ENCODE measurements at regions of chr18 and their contacts with region 1.

Region 1: DNA sequence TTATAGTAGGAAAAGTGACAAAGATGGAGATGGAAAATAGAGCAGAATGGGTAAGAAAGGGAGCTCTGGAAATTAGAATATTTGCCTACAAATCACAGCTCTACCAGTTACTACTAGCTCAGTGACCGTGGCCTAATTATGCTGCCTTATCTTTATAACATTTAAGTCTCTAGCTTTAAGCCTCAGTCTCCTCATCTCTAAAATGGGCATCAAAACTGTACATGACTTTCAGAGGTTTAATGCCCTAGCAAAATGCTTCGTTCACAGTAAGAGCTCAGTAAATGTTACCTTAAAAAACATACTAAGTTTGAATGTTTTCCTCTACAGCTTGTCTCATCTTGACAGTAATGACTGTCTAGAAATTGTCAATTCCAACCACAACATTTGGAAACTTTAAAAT is 8.3 kb upstream of the PTPRM start:
- DNase-seq: no peak
- H3K4me3 ChIP-seq: no peak overlapping the region
- H3K27me3 ChIP-seq: no peaks in the 10 kb centered on the region
- CTCF ChIP-seq: no peak

Region 2: GRCh38 chr18:7541835-7542234 is 16.9 kb before region 1 on chr18:
- CTCF ChIA-PET with region 1: no interaction called
- POLR2A ChIA-PET with region 1: interaction called, 13 read pairs
- DNase-seq: no peak
- H3K4me3 ChIP-seq: no peak overlapping the region
- H3K27me3 ChIP-seq: no peaks in the 10 kb centered on the region; the same call in 1 of the 2 replicates
- CTCF ChIP-seq: no peak

Region 3: DNA sequence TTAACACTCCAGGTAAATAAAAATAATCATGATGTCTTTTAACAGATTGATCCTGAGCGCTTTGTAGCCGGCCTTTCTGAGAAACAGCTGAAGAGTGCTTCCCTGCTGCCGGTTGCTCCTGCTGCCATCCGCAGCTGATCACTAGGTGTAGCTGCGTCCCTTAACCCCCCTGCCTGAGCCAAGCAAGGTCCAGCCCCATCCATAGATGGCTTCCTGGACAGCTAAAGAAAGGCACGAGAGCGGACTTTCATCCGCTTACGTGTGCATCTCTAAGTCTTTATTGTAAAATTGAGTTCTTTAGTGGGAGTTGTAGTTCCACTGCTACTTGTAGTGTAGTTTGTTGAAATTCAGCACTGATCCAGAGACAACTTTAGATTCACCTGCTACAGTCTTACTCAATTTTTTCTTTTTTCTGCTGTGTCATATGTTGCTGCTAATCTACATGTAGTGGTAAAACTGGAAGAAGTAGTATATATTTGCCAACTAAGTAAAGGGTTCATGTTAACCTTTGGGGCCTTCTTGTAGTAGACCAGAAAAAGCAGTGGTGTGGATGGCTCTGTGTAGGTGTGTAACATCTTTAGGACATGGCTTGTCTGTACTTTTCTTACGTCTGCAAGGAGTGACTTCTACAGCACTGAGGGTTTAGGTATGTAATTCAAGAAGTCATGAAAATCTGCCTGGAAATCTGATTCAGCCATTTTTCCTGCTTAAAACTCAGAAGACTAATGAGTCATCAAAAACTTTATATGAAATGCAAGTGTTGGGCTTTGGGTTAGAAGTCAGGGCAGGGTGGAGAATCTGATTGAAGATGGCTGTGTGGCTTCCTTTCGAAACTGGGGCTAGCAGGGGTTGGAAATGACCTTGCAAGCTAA is 16.6 kb after region 1 on chr18:
- CTCF ChIA-PET with region 1: no interaction called
- POLR2A ChIA-PET with region 1: no interaction called
- DNase-seq: no peak
- H3K4me3 ChIP-seq: no peak overlapping the region
- H3K27me3 ChIP-seq: no peaks in the 10 kb centered on the region
- CTCF ChIP-seq: no peak

Region 4: GRCh38 chr18:7686278-7686677 is 127.5 kb after region 1 on chr18:
- CTCF ChIA-PET with region 1: no interaction called
- POLR2A ChIA-PET with region 1: no interaction called
- DNase-seq: no peak
- H3K4me3 ChIP-seq: no peak overlapping the region
- H3K27me3 ChIP-seq: no peaks in the 10 kb centered on the region
- CTCF ChIP-seq: no peak